CD4-positive, alpha-beta memory T cell (primary cell): ENCODE measurements at regions of chr10 and their contacts with region 1.

Region 1: DNA sequence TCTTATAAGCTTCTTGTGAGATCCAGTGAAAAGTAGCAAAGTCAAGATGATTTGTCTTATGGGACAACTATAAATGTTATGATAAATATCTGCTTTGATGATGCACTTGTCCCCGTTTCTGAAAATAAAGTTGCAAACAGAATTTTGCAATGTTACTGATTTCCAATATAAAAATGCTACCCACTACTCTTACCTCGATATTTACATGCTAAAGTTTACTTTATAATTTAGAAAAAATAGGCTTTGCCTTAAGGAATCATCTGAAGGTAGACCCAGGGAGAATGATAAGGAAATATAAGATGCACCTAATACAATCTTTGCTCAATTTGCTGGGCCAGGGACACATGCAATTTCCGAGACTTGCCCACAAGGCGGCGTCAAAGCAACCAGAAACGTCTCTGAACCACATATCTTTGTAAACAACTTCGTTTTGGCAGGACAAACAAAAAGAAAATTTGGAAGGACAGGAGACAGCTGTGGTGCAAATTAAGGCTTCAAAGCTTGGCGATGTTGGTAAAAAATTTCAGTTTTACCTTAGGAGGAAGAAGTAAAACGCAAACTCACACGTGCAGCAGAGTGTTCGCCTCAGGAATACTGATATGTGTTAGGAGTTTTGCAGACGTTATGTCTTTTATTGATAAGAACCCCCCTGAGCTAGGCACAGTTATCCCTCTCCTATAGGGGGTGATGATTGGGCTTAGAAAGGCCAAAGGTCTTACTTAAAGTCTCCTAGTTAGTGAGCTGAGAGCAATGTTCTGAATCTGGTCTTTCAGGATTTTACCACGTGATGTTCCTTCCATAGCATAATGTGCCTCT is 134.4 kb downstream of the PRKCQ start:
- DNase-seq: peak; percentile 41 to 50 (median 46)
- H3K4me3 ChIP-seq: no peak overlapping the region
- H3K4me3 Mint-ChIP-seq: peak overlapping the region in 2 of 8 donors; percentile 3 to 41
- H3K27ac ChIP-seq: no peak overlapping the region
- H3K27ac Mint-ChIP-seq: peak overlapping the region in 6 of 7 donors; percentile 24 to 73 (median 58)
- H3K4me1 ChIP-seq: peaks cover 5% of the 10 kb centered on the region
- H3K4me1 Mint-ChIP-seq: peaks cover 18 to 44% (median 30%) of the 10 kb centered on the region in 4 donors
- H3K27me3 ChIP-seq: no peaks in the 10 kb centered on the region
- H3K27me3 Mint-ChIP-seq: no peaks in the 10 kb centered on the region

Region 2: DNA sequence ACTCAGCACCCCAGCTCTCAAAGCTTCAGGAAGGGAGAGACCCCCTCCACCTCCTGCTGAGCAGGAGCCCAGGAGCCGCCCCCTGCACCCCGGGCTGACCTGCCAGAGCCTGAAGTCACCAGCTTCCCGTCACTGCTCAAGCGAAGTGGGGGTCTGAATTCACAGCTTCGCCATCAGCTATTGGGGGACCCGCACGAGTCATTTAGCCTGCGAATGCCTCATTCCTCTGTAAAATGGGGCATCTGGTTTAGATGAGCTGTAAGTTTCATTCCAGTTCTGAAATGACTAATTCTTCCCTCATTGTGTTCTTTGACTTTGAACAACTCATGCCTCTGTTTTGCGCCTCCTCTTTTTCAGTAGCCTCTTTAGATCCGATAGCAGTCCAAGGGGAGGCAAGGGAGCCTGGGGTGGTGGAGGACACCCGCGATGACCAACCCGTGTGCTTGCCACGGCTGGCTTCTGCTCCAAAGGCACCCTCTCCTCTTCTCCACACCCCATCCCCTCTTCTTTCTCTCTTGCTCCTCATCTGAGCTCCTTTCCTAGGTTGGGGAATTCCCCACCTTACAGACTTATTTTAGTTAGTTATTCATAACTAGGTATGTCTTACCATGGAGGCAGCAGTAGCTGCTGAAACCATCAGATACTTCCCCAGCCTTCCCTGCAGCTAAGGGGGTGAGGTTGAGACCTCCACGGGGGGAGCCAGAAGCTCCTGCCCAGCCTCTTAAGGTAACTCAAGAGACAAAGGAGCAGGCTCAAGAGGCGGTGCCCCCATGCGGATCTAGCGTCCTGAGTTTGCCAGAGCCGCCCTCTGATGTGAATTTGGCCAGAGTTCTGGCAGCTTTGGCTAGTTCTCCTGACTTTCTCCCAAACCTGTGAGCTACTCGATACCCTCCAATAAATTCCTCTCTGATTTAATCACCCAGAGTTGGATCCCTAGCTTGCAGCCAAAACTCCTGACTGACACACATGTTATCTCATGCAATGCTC is 309.2 kb before region 1 on chr10:
- CTCF ChIA-PET with region 1: no interaction called
- POLR2A ChIA-PET with region 1: no interaction called
- intact Hi-C with region 1: no loop called
- DNase-seq: peak in 1 of 5 donors; percentile 61
- H3K4me3 ChIP-seq: no peak overlapping the region
- H3K4me3 Mint-ChIP-seq: peak overlapping the region in 7 of 8 donors; percentile 36 to 79 (median 63)
- H3K27ac ChIP-seq: peak overlapping the region; percentile 27
- H3K27ac Mint-ChIP-seq: peak overlapping the region; percentile 59 to 95 (median 89)
- H3K4me1 ChIP-seq: peaks cover 53% of the 10 kb centered on the region
- H3K4me1 Mint-ChIP-seq: peaks cover 43 to 64% (median 56%) of the 10 kb centered on the region in 4 donors
- H3K27me3 ChIP-seq: no peaks in the 10 kb centered on the region
- H3K27me3 Mint-ChIP-seq: no peaks in the 10 kb centered on the region

Region 3: DNA sequence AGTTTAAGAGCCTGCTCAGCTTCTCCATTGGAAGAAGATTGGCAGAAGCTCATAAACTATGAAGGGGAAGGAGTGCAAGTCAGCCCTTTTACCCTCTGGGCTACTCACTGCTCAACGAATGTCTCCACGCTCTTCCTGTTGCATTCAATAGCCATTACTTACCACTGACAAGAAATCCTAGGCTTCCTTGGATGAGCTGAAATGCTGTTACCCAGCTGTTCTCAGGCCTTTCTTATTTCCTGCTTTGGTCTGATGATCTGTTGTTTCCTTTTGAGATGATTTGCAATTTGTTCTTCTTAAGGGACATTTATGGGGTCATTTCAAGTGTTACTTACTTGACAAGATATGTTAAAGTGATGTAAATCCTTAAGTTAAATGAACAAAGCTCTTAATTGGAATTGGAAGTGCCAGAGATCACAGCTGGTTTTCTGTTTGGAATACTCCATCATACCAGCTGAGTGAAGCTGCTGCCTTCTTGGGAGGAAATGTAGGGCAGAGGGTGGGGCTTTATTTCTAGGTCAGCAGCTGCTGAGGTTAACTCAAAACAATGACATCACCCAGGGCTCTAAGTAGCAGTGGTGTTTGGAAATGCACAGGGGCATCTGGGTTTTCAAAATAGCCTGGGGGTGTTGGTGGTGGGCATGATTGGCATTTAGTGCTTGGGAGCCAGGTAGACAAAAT is 35.6 kb before region 1 on chr10:
- CTCF ChIA-PET with region 1: interaction called, 11 read pairs
- POLR2A ChIA-PET with region 1: interaction called, 6 read pairs
- intact Hi-C with region 1: no loop called
- DNase-seq: peak; percentile 71 to 84 (median 79)
- H3K4me3 ChIP-seq: peak overlapping the region; percentile 11 to 34
- H3K4me3 Mint-ChIP-seq: peak overlapping the region; percentile 76 to 93 (median 81)
- H3K27ac ChIP-seq: peak overlapping the region; percentile 78
- H3K27ac Mint-ChIP-seq: peak overlapping the region; percentile 93 to 99 (median 98)
- H3K4me1 ChIP-seq: peaks cover 50% of the 10 kb centered on the region
- H3K4me1 Mint-ChIP-seq: peaks cover 31 to 66% (median 44%) of the 10 kb centered on the region in 4 donors
- H3K27me3 ChIP-seq: no peaks in the 10 kb centered on the region
- H3K27me3 Mint-ChIP-seq: no peaks in the 10 kb centered on the region

Region 4: GRCh38 chr10:6456067-6456466 is 10.4 kb after region 1 on chr10:
- CTCF ChIA-PET with region 1: interaction called, 13 read pairs
- POLR2A ChIA-PET with region 1: no interaction called
- intact Hi-C with region 1: no loop called
- DNase-seq: no peak
- H3K4me3 ChIP-seq: no peak overlapping the region
- H3K4me3 Mint-ChIP-seq: peak overlapping the region in 2 of 8 donors; percentile 17 to 31
- H3K27ac ChIP-seq: no peak overlapping the region
- H3K27ac Mint-ChIP-seq: peak overlapping the region in 4 of 7 donors; percentile 42 to 72 (median 65)
- H3K4me1 ChIP-seq: no peaks in the 10 kb centered on the region
- H3K4me1 Mint-ChIP-seq: peaks cover 18 to 33% (median 21%) of the 10 kb centered on the region in 4 donors
- H3K27me3 ChIP-seq: no peaks in the 10 kb centered on the region
- H3K27me3 Mint-ChIP-seq: no peaks in the 10 kb centered on the region

Region 5: GRCh38 chr10:6593241-6593671 is 147.5 kb after region 1 on chr10:
- CTCF ChIA-PET with region 1: interaction called, 10 read pairs
- POLR2A ChIA-PET with region 1: no interaction called
- intact Hi-C with region 1: no loop called
- DNase-seq: peak in 4 of 5 donors; percentile 24 to 68 (median 28)
- H3K4me3 ChIP-seq: no peak overlapping the region
- H3K4me3 Mint-ChIP-seq: peak overlapping the region; percentile 39 to 81 (median 74)
- H3K27ac ChIP-seq: peak overlapping the region; percentile 40
- H3K27ac Mint-ChIP-seq: peak overlapping the region; percentile 88 to 97 (median 94)
- H3K4me1 ChIP-seq: peaks cover 93% of the 10 kb centered on the region
- H3K4me1 Mint-ChIP-seq: peaks cover 63 to 97% (median 77%) of the 10 kb centered on the region in 4 donors
- H3K27me3 ChIP-seq: no peaks in the 10 kb centered on the region
- H3K27me3 Mint-ChIP-seq: no peaks in the 10 kb centered on the region

Region 6: GRCh38 chr10:6642876-6643275 is 197.2 kb after region 1 on chr10:
- CTCF ChIA-PET with region 1: interaction called, 20 read pairs
- POLR2A ChIA-PET with region 1: interaction called, 3 read pairs
- intact Hi-C with region 1: loop called (anchors 1 kb)
- DNase-seq: no peak
- H3K4me3 ChIP-seq: no peak overlapping the region
- H3K4me3 Mint-ChIP-seq: peak overlapping the region in 5 of 8 donors; percentile 20 to 50 (median 32)
- H3K27ac ChIP-seq: no peak overlapping the region
- H3K27ac Mint-ChIP-seq: peak overlapping the region in 5 of 7 donors; percentile 12 to 59 (median 40)
- H3K4me1 ChIP-seq: peaks cover 27% of the 10 kb centered on the region
- H3K4me1 Mint-ChIP-seq: peaks cover 18 to 36% (median 25%) of the 10 kb centered on the region in 4 donors
- H3K27me3 ChIP-seq: no peaks in the 10 kb centered on the region
- H3K27me3 Mint-ChIP-seq: no peaks in the 10 kb centered on the region

Region 7: DNA sequence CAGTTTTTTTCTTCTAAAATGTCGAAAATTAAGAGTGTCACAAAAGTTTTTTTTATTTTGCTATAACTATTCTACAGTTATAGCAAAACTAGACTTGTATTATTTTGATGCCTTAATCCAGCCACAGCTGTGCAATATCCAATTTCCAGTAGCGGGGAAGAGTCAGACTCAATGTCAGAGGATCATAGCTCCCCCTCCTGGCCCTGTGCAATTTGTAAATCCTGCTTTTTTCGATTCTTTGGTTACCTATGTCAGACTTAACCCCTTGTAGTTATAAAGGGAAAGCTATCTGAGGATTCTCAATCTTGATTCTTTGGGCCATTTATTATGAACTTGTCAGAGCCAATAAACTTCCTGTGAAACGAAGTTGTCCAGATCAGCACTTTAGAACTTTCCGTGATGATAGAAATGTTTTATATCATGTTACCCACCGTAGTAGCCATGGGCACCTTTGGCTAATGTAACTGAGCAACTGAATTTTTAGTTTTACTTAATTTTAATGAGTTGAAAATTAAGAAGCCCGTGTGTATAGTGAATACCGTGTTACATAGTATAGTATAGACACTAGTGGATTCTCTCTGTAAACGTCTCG is 222.1 kb after region 1 on chr10:
- CTCF ChIA-PET with region 1: interaction called, 69 read pairs
- POLR2A ChIA-PET with region 1: interaction called, 3 read pairs
- intact Hi-C with region 1: loop called (anchors 1 kb)
- DNase-seq: peak in 4 of 5 donors; percentile 15 to 34 (median 26)
- H3K4me3 ChIP-seq: no peak overlapping the region
- H3K4me3 Mint-ChIP-seq: peak overlapping the region in 1 of 8 donors; percentile 10
- H3K27ac ChIP-seq: no peak overlapping the region
- H3K27ac Mint-ChIP-seq: no peak overlapping the region
- H3K4me1 ChIP-seq: peaks cover 22% of the 10 kb centered on the region
- H3K4me1 Mint-ChIP-seq: peaks cover 15 to 28% (median 21%) of the 10 kb centered on the region in 4 donors
- H3K27me3 ChIP-seq: no peaks in the 10 kb centered on the region
- H3K27me3 Mint-ChIP-seq: no peaks in the 10 kb centered on the region

Region 8: DNA sequence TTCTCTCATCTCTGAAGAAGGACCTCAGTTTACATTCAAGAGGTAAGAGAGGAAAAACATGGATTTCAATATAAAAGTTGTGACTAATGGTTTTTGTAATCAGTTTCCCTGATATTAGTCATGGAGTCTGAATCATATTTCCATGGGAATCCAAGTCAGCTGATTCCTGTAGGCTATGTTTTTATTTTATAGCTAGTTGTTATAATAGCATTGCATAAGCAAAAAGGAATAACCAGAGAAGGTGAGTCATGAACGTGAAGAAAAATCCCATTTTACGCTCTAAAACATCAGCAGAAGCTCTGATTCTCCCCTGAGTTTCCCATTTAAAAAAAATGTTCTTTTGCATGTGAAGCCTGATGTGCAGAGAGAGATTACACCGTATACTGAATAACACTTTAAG is 665.9 kb after region 1 on chr10:
- CTCF ChIA-PET with region 1: no interaction called
- POLR2A ChIA-PET with region 1: no interaction called
- intact Hi-C with region 1: no loop called
- DNase-seq: no peak
- H3K4me3 ChIP-seq: no peak overlapping the region
- H3K4me3 Mint-ChIP-seq: no peak overlapping the region
- H3K27ac ChIP-seq: no peak overlapping the region
- H3K27ac Mint-ChIP-seq: no peak overlapping the region
- H3K4me1 ChIP-seq: no peaks in the 10 kb centered on the region
- H3K4me1 Mint-ChIP-seq: peaks cover 0 to 3% (median 0%) of the 10 kb centered on the region in 4 donors
- H3K27me3 ChIP-seq: no peaks in the 10 kb centered on the region
- H3K27me3 Mint-ChIP-seq: peaks cover 0 to 5% of the 10 kb centered on the region in 2 donors